Activated CD4-positive, alpha-beta T cell treated with anti-CD3 and anti-CD28 coated beads, Interleukin-2, amount 10 ng/mL, durations not matched to agents 24 days and 14 days (primary cell): ENCODE measurements at regions of chr6 and their contacts with region 1.

Region 1: GRCh38 chr6:127464881-127465459 is 5.8 kb upstream of the KIAA0408 start:
- DNase-seq: peak; percentile 88
- H3K4me3 Mint-ChIP-seq: no peak overlapping the region
- H3K27ac Mint-ChIP-seq: no peak overlapping the region
- H3K4me1 Mint-ChIP-seq: peaks cover 8% of the 10 kb centered on the region
- H3K27me3 Mint-ChIP-seq: no peaks in the 10 kb centered on the region

Region 2: GRCh38 chr6:126335210-126335609 is 1129.8 kb before region 1 on chr6:
- intact Hi-C with region 1: no loop called
- DNase-seq: no peak
- H3K4me3 Mint-ChIP-seq: no peak overlapping the region
- H3K27ac Mint-ChIP-seq: no peak overlapping the region
- H3K4me1 Mint-ChIP-seq: no peaks in the 10 kb centered on the region
- H3K27me3 Mint-ChIP-seq: peaks cover 1% of the 10 kb centered on the region

Region 3: GRCh38 chr6:127302728-127303660 is 162.0 kb before region 1 on chr6:
- intact Hi-C with region 1: loop called (anchors 2 kb)
- DNase-seq: peak; percentile 81
- H3K4me3 Mint-ChIP-seq: no peak overlapping the region
- H3K27ac Mint-ChIP-seq: no peak overlapping the region
- H3K4me1 Mint-ChIP-seq: peaks cover 6% of the 10 kb centered on the region
- H3K27me3 Mint-ChIP-seq: no peaks in the 10 kb centered on the region

Region 4: DNA sequence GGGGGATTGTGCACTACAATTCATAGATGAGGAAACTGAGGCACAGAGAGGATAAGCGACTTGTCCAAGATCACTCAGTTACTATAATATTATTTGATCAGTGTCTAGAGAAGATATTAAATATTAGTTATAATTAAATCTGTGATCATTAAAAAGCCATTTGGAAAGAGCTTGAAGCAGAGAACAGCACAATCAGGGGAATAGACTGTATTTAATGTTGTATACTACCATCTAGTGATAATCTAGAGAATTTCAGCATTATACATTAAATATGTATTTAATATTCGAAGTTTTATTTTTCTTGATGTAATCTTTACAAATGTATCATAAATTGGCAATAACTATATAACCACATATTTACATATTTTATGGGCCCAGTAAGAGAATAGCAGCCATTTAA is 74.3 kb after region 1 on chr6:
- intact Hi-C with region 1: loop called (anchors 1 kb)
- DNase-seq: no peak
- H3K4me3 Mint-ChIP-seq: no peak overlapping the region
- H3K27ac Mint-ChIP-seq: no peak overlapping the region
- H3K4me1 Mint-ChIP-seq: peaks cover 3% of the 10 kb centered on the region
- H3K27me3 Mint-ChIP-seq: peaks cover 27% of the 10 kb centered on the region

Region 5: GRCh38 chr6:127641905-127642304 is 176.9 kb after region 1 on chr6:
- intact Hi-C with region 1: loop called (anchors 5 kb)
- DNase-seq: peak; percentile 61
- H3K4me3 Mint-ChIP-seq: no peak overlapping the region
- H3K27ac Mint-ChIP-seq: no peak overlapping the region
- H3K4me1 Mint-ChIP-seq: no peaks in the 10 kb centered on the region
- H3K27me3 Mint-ChIP-seq: peaks cover 4% of the 10 kb centered on the region